Tibial artery (tissue), 4 donors: ENCODE measurements at regions of chr4 and their contacts with region 1.

Region 1: DNA sequence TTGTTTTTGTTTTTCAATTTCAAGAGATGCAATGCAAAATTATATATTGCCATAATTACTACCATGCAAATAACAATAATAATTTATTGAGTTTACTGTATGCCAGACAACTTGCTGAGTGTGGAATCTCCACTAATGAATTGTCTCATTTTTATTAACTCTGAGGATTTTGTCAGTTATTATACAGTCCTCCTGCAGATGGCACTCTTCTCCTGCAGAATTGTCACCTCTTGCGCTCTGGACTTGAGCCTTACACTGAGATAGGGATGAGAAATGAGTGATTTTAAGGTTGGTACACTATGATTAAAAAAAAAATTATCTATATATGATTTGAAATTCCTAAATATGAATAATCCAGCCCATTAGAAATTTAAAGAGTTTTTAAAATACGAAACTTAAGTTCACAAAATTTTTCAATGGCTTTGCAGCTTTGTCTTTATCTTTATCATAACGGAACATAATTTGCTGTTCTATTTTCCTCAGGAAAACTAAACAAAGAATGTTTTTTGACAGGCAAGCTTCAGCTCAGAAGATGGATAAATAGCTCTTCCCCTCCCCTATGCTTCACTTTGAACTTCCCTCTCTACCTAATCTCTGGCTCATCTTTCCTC is 12.7 kb upstream of the PAQR3 start:
- DNase-seq: no peak
- H3K4me3 ChIP-seq: no peak overlapping the region
- H3K27ac ChIP-seq: no peak overlapping the region
- H3K4me1 ChIP-seq: peaks cover 0 to 9% (median 0%) of the 10 kb centered on the region in 4 donors
- H3K27me3 ChIP-seq: no peaks in the 10 kb centered on the region
- CTCF ChIP-seq: peak; percentile 73 to 88

Region 2: DNA sequence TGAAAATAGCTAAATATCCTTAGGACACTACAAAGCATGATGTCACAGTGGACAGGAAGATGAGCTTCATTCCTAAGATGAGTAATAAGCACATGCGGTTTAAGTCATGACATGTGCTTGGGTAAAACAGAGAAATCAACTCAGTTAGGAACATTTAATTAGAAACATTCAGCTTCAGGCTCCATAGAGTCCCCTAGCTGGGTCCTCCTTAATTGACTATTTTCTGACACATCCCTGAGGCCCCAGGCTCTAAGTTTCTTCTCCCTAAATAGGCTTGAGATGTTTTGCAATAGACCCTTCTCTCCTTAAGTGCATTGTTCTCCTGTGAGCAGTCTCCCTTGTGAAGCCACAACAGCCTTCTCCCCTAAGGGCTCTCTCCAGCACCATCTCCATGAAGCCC is 470.8 kb before region 1 on chr4:
- intact Hi-C with region 1: no loop called
- DNase-seq: no peak
- H3K4me3 ChIP-seq: no peak overlapping the region
- H3K27ac ChIP-seq: no peak overlapping the region
- H3K4me1 ChIP-seq: no peaks in the 10 kb centered on the region
- H3K27me3 ChIP-seq: no peaks in the 10 kb centered on the region
- CTCF ChIP-seq: no peak

Region 3: DNA sequence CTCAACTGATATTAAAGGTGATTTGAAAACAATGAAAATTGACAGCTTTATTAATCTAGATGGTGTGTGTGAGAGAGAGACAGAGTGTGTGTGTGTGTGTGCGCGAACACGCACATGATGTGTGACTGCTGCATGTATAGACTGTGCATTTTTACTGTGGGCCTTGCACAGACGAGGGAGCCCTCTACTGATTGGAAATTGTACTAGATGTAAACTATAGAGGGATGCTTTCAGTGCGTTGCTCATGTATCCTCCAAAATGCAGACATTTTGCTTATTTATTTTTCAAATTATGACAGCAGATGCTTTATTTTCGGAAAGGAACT is 624.4 kb after region 1 on chr4:
- intact Hi-C with region 1: loop called (anchors 10 kb)
- DNase-seq: no peak
- H3K4me3 ChIP-seq: no peak overlapping the region
- H3K27ac ChIP-seq: peak overlapping the region; percentile 6 to 68
- H3K4me1 ChIP-seq: peaks cover 0 to 35% (median 15%) of the 10 kb centered on the region in 4 donors
- H3K27me3 ChIP-seq: no peaks in the 10 kb centered on the region
- CTCF ChIP-seq: peak in 1 of 2 experiments; percentile 30

Region 4: GRCh38 chr4:80213117-80213815 is 1261.3 kb after region 1 on chr4:
- intact Hi-C with region 1: loop called (anchors 5 kb)
- DNase-seq: no peak
- H3K4me3 ChIP-seq: no peak overlapping the region
- H3K27ac ChIP-seq: no peak overlapping the region
- H3K4me1 ChIP-seq: no peaks in the 10 kb centered on the region
- H3K27me3 ChIP-seq: peaks cover 0 to 22% of the 10 kb centered on the region in 2 donors
- CTCF ChIP-seq: no peak